PC-9 (cell line): ENCODE measurements at regions of chr12 and their contacts with region 1.

Region 1: DNA sequence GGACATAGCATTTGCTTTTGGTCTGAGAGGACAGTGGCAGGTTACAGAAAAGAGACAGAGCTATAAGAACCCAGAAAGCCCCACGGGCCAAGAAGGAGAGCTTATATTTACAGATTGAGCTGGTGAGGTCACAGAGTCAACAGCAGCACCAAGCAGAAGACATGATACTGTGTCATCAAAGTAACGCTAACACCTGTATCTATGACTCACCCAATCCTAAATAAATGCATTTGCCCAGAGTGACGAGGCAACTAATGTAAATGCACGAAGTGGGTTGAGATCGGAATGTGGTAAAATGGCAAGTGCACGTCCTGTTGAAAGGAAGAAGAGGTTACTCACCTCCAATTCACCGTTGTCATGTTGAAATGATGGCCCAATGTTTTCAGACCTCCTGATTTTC is 6.7 kb upstream of the CD163L1 start:
- DNase-seq: no peak
- H3K4me3 ChIP-seq: no peak overlapping the region
- H3K27ac ChIP-seq: no peak overlapping the region
- H3K4me1 ChIP-seq: no peaks in the 10 kb centered on the region
- H3K27me3 ChIP-seq: no peaks in the 10 kb centered on the region
- CTCF ChIP-seq: no peak

Region 2: DNA sequence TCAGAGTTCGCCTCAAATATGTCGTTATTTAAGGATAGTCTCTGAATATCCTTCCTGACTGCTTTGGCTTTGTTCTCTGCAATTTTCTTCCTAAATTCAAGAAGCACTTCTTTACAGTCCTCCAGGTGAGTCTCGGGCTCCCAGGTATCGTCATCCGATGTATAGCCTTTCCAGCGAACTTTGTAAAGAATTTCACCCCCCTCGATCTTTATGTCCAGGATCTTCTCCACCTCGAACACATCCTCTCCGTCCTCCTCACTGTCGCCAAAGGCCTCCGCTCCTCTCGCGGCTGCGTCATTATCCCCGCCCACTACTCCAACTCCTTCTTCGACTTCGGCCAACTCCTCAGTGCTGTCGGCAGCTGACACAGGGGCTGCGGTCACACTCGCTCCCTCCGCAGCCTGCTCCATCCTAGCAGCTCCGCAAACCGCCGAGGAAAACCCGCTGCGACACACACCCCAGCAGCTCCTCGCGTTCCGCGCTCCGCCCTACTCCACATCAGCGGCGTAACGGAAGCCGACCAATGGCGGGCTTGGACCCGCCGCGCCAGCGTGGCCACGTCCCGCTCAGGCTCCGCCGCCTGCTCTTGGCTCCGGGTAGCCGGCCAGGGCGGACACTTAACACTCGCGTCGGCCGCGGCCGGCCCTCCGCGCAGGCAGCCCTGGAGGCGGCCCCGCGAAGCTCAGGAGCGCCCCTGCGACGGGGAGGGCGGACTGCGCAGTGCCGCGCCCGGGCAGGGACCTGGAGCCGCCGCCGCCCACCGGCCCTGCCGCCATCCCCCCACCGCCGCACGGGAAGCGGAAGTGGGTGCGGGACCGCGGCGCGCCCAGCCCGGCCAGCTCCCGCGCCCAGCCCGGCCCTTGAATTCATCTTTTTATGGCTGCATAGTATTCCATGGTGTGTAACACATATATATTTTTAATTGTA is 10.8 kb before region 1 on chr12:
- CTCF ChIA-PET with region 1: no interaction called
- POLR2A ChIA-PET with region 1: interaction called, 12 read pairs
- intact Hi-C with region 1: no loop called
- DNase-seq: peak; percentile 65 to 95
- H3K4me3 ChIP-seq: peak overlapping the region; percentile 46
- H3K27ac ChIP-seq: no peak overlapping the region
- H3K4me1 ChIP-seq: peaks cover 4% of the 10 kb centered on the region; the same call in 1 of the 2 replicates
- H3K27me3 ChIP-seq: no peaks in the 10 kb centered on the region
- CTCF ChIP-seq: 0 out of 2 replicates have a peak, but pooled peaks have one; percentile 9

Region 3: GRCh38 chr12:7483343-7483742 is 32.7 kb after region 1 on chr12:
- CTCF ChIA-PET with region 1: no interaction called
- POLR2A ChIA-PET with region 1: interaction called, 17 read pairs
- intact Hi-C with region 1: no loop called
- DNase-seq: no peak
- H3K4me3 ChIP-seq: no peak overlapping the region
- H3K27ac ChIP-seq: no peak overlapping the region
- H3K4me1 ChIP-seq: no peaks in the 10 kb centered on the region
- H3K27me3 ChIP-seq: no peaks in the 10 kb centered on the region
- CTCF ChIP-seq: no peak